ENCODE measurements at regions of chr6 and their contacts with region 1.

Region 1: GRCh38 chr6:52399511-52400312 is 20.4 kb upstream of the EFHC1 start:
- ATAC-seq: peak in 4 of 8 experiments; percentile 66 to 81 (median 77)
- H3K4me3 ChIP-seq: no peak overlapping the region
- H3K27ac ChIP-seq: no peak overlapping the region
- H3K4me1 ChIP-seq: peaks cover 0 to 2% of the 10 kb centered on the region in 2 donors

Region 2: DNA sequence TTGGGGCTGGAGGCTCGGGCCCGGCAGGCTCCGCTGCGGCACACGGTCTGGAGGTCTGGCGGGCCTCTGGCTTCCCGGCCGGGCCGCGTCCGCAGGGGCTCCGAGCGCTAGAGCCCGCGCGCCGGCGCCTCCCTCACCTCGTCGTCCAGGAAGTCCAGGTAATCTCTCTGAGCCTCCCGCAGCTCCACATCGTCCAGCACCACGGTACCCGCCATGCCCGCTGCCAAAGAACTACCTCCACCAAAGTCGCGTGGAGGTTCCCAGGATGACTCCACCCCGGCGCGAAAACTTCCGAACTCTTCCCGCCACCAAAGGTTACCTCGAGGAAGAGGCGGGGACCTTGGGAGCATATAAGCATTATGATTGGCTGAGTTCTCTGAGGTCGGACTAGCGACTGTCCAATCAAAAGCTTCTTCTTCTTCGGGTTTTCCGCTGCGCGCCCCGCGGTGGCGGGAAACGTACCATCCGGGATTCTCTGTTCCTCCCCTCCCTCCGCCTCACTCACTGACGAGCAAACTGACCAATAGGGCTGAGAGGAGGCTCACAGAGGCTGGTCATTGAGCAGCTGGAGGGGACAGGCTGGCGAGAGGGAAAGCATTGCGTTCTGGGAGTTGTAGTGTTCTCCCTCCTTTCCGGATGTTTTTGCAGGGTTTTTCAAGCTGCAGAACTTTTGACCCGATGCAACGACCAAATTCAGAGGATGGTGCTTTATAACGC is 115.1 kb before region 1 on chr6 and contains the start of gene MCM3:
- in situ Hi-C with region 1: loop called in 2 of 9 experiments (anchors 25 kb)
- ATAC-seq: peak; percentile 97 to 100 (median 99)
- H3K4me3 ChIP-seq: peak within 1 kb of the TSS; percentile 55 to 78 (median 64)
- H3K27ac ChIP-seq: peak within 1 kb of the TSS in 1 of 2 donors; percentile 9
- H3K4me1 ChIP-seq: peaks cover 2 to 8% of the 10 kb centered on the region in 2 donors
- total RNA-seq, gene MCM3: 12.7 to 92.8 (median 19.4) TPM

Region 3: DNA sequence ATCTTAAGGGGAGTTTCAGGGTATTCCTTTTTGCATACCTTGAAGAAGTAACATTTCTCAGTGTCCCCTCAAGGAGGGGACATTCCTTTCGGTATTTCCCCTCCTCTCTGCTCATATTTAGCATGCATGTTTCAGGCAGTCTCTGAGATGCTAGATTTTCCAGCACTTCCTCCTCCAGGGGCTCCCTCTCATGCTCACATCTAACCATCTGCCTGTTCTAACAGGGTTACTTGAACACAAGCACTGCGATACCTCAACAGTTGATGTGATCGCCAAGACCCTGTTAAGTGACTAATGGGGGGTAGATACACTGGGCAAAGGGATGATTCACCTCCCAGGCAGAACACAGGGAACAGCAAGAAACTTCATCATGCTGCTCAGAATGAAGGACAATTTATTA is 102.3 kb before region 1 on chr6:
- in situ Hi-C with region 1: loop called in 3 of 9 experiments (anchors 10 to 25 kb)
- ATAC-seq: no peak
- H3K4me3 ChIP-seq: no peak overlapping the region
- H3K27ac ChIP-seq: no peak overlapping the region
- H3K4me1 ChIP-seq: no peaks in the 10 kb centered on the region

Region 4: GRCh38 chr6:52881996-52882841 is 482.5 kb after region 1 on chr6:
- in situ Hi-C with region 1: no loop called
- ATAC-seq: peak; percentile 61 to 100 (median 93)
- H3K4me3 ChIP-seq: no peak overlapping the region
- H3K27ac ChIP-seq: no peak overlapping the region
- H3K4me1 ChIP-seq: no peaks in the 10 kb centered on the region